ENCODE measurements at regions of chr12 and their contacts with region 1.

Region 1: DNA sequence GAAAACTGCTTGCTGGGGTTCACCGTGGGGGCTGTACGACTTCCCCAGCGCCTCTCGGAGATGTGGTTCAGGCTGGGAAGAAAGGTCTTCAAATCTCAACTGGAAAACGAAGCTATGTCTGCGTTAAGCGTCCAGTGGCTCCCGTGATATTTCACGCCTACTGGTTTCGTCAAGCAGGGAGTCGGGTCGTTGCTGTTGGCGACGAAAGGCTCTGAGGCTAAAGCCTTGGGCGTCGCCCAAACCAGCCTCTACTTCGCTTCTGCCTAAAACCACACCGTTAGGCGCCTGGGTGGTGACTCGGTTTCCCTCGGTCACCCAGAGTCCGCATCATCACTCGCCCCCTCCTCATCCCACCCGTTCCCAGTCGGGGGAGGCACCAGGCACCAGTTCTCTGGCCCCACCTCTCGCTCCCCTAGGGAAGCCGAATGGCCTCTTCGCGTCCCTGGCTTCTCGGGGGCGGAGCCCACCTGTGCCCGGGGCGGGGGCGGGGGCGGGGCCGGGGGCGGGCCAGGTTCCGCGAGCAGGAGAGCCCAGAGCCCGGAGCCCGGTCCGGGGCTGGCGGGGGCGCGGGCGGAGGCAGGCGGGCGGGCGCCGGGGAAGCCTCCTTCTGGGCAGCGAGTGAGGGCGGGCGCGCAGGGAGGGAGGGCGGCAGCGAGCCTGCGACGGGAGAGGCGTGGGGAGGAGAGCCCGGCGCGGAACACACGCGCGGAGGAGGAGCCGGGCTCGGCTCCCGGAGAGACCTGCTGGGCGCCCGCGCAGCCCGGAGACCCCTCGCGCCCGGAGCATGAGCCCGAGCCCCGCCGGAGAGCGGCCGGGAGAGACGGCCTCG is at the start of gene B4GALNT3:
- DNase-seq: no peak
- ATAC-seq: peak; percentile 67
- H3K4me3 ChIP-seq: peak within 1 kb of the TSS; percentile 46 to 71 (median 64); a peak in 5 of 6 replicates
- H3K27ac ChIP-seq: no peak within 1 kb of the TSS
- H3K4me1 ChIP-seq: peaks cover 27% of the 10 kb centered on the region
- H3K27me3 ChIP-seq: peaks cover 4 to 38% of the 10 kb centered on the region in 2 experiments
- CTCF ChIP-seq: no peak
- EP300 ChIP-seq: no peak
- POLR2A ChIP-seq: no peak
- RAD21 ChIP-seq: no peak
- total RNA-seq, gene B4GALNT3: 2.9 and 4.4 TPM in 2 replicates

Region 2: GRCh38 chr12:541676-542324 is 82.2 kb after region 1 on chr12:
- CTCF ChIA-PET with region 1: interaction called, 227 read pairs
- POLR2A ChIA-PET with region 1: no interaction called
- in situ Hi-C with region 1: loop called (anchors 5 kb)
- intact Hi-C with region 1: loop called (anchors 5 kb)
- DNase-seq: no peak
- ATAC-seq: no peak
- H3K4me3 ChIP-seq: no peak overlapping the region
- H3K27ac ChIP-seq: no peak overlapping the region
- H3K4me1 ChIP-seq: no peaks in the 10 kb centered on the region
- H3K27me3 ChIP-seq: no peaks in the 10 kb centered on the region; a peak in 1 of 5 replicates
- CTCF ChIP-seq: no peak
- EP300 ChIP-seq: no peak
- POLR2A ChIP-seq: no peak
- RAD21 ChIP-seq: no peak

Measured in HepG2 (cell line).